ENCODE measurements at regions of chr19 and their contacts with region 1.

Region 1: DNA sequence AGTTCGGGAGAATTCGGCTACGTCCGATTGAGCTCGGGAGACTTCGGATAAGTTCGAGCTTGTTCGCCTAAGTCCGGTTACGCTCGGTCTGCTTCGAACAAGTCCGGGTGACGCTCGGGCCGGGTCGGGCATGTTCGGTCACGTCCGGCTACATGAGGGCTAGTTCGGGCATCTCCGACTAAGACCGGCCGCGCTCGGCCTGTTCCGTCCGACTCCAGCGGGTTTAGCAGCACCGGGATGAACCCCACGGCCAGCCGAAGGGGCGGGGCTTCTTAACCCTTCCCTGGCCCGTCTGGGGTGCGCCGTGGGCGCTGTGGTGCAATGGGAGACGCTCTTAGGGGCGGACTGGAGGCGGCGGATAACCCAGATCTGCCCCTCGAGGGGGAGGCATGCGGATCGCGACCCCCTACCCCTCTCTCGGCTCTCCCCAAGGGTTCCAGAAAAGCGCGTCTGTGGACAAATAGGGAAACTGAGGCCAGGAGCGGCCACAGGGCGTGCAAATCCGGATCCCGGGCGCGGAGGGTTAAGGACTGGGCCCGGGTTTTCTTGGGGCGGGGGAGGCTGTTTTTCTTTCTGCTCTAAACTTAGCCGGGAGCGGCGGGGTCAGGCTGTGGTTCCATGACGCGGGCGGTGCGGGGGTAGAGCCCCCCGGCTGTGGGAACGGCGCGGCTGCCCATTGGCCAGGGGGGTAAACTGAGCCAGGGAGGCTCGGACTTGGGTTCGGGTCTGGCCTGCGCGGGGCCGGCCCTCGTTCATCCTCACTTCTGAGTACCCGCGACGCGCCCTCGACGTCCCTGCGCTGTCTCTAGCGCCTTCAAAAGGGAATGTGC is 1.5 kb downstream of the PDE4C start:
- DNase-seq: peak; percentile 90
- H3K4me3 Mint-ChIP-seq: peak overlapping the region; percentile 73
- H3K27ac Mint-ChIP-seq: no peak overlapping the region
- H3K4me1 Mint-ChIP-seq: peaks cover 19% of the 10 kb centered on the region
- H3K27me3 Mint-ChIP-seq: peaks cover 49% of the 10 kb centered on the region

Region 2: DNA sequence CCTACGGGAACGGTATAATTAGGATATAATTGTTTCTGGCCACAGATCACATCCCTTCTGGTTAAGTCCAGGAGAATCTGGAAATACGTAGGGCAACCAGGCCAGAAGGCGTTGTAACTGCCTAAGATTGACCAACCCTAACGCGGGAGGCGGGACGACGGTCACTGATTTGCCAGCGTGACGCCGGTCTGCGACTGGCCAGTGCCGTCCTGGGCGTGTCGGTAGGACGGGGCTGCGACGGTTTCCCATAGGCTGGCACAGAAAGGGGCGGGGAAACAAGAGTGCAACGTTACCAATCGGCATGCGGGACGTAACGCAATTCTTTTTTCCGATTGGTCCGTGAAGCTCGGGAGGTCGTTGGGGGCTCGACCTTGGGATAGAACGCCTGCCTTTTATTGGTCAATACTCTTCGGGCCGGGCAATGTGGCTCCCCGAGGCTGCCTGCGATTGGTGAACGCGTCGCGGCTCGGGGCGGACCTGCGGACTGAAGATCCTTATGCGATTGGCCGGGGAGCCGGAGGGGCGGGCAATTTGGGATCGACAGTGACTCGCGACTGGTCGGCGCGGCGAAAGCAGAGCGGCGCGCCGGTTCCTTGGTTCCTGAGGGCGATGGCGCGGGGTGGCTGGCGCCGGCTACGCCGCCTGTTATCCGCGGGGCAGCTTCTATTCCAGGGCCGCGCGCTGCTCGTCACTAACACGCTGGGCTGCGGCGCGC is 31.9 kb before region 1 on chr19 and contains the start of gene MPV17L2:
- CTCF ChIA-PET with region 1: no interaction called
- POLR2A ChIA-PET with region 1: no interaction called
- DNase-seq: peak; percentile 99
- H3K4me3 Mint-ChIP-seq: peak within 1 kb of the TSS; percentile 79
- H3K27ac Mint-ChIP-seq: peak within 1 kb of the TSS; percentile 93
- H3K4me1 Mint-ChIP-seq: peaks cover 25% of the 10 kb centered on the region
- H3K27me3 Mint-ChIP-seq: no peaks in the 10 kb centered on the region
- total RNA-seq, gene MPV17L2: 6.1 to 6.5 TPM

Region 3: GRCh38 chr19:18203863-18204393 is 20.8 kb before region 1 on chr19 and contains the start of gene RAB3A:
- CTCF ChIA-PET with region 1: interaction called, 10 read pairs
- POLR2A ChIA-PET with region 1: no interaction called
- DNase-seq: peak; percentile 100
- H3K4me3 Mint-ChIP-seq: peak within 1 kb of the TSS; percentile 94
- H3K27ac Mint-ChIP-seq: peak within 1 kb of the TSS; percentile 98
- H3K4me1 Mint-ChIP-seq: peaks cover 23% of the 10 kb centered on the region
- H3K27me3 Mint-ChIP-seq: peaks cover 4% of the 10 kb centered on the region
- total RNA-seq, gene RAB3A: 4.0 to 5.2 TPM